ENCODE measurements at regions of chr7 and their contacts with region 1.

Region 1: GRCh38 chr7:75905785-75906604 is 9.0 kb upstream of the POR start:
- DNase-seq: peak; percentile 16 to 73 (median 65)
- ATAC-seq: peak; percentile 37 to 91 (median 76)
- H3K4me3 ChIP-seq: no peak overlapping the region
- H3K27ac ChIP-seq: peak overlapping the region in 5 of 12 donors; percentile 4 to 38 (median 25)
- H3K4me1 ChIP-seq: peaks cover 0 to 9% (median 0%) of the 10 kb centered on the region in 12 donors
- H3K27me3 ChIP-seq: no peaks in the 10 kb centered on the region
- CTCF ChIP-seq: no peak
- POLR2A ChIP-seq: no peak

Region 2: DNA sequence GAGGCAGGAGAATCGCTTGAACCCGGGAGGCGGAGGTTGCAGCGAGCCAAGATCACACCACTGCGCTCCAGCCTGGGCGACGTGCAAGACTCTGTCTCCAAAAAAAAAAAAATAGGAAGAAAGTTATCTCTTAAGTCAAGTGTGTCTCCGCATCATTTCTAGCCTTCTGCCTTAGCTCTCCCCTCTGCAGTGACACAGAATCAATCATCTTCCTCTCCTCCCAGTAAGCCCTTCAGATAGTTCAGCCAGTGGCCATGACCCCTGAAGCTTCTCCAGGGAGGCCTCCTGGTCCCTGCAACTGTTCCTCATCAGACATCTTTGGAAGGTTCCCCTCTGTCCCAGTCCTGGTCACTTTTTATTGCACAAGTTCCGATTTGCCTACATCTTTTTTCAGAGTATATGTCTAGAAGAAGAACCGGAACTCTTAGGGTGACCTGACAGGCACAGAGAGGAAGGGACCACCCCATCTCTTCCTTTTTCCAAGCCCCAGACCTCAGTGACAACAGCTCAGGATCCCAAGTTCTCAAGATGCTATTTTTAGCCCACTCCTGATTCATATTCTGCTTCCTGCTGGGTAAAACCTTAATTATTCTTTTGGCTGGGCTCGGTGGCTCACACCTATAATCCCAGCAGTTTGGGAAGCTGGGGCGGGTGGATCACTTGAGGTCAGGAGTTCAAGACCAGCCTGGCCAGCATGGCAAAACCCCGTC is 33.8 kb before region 1 on chr7:
- intact Hi-C with region 1: loop called in 2 of 10 experiments (anchors 2 to 5 kb)
- DNase-seq: peak in 1 of 5 donors; percentile 55
- ATAC-seq: peak; percentile 37 to 78 (median 74)
- H3K4me3 ChIP-seq: no peak overlapping the region
- H3K27ac ChIP-seq: peak overlapping the region in 11 of 12 donors; percentile 35 to 71 (median 63)
- H3K4me1 ChIP-seq: peaks cover 0 to 37% (median 10%) of the 10 kb centered on the region in 12 donors
- H3K27me3 ChIP-seq: no peaks in the 10 kb centered on the region
- CTCF ChIP-seq: no peak
- POLR2A ChIP-seq: no peak

Region 3: DNA sequence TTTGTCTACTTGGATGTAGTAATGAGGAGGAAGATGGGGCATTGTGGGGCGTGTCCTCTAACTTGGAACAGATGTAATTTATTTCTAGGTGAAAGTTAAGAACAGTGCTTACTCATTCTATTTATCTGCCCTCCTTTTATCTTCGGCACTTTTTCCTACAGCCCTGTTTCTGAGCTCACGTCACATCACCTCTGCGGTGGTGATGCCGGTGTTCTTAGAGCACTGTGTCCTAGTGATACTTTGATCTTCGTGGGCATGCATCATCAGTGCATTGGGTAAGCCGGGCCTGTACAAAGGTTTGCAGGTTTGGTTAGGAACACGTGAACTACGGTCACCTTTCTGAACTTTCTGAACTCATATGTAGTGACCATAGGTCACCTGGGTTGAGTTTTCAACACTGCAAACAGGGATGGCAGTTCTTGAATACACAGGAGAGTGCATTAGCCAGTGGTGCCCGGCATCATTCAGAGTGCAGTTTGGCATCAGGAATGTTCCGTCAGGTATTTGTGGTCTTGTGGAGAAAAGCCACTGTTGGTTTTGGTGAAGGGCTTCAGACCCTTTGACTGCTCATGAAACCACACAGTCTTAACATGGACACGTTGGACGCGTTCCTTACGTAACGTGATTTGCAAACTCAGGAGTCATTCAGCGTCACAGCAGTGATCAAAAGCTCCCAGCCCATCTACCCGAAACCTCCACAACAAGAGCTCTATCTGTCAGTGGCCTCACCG is 14.6 kb after region 1 on chr7:
- intact Hi-C with region 1: no loop called
- DNase-seq: peak in 1 of 5 donors; percentile 80
- ATAC-seq: peak; percentile 67 to 88 (median 82)
- H3K4me3 ChIP-seq: no peak overlapping the region
- H3K27ac ChIP-seq: peak overlapping the region in 4 of 12 donors; percentile 8 to 84 (median 46)
- H3K4me1 ChIP-seq: peaks cover 9 to 78% (median 36%) of the 10 kb centered on the region in 12 donors
- H3K27me3 ChIP-seq: no peaks in the 10 kb centered on the region
- CTCF ChIP-seq: no peak
- POLR2A ChIP-seq: no peak